ENCODE measurements at regions of chr5 and their contacts with region 1.

Region 1: DNA sequence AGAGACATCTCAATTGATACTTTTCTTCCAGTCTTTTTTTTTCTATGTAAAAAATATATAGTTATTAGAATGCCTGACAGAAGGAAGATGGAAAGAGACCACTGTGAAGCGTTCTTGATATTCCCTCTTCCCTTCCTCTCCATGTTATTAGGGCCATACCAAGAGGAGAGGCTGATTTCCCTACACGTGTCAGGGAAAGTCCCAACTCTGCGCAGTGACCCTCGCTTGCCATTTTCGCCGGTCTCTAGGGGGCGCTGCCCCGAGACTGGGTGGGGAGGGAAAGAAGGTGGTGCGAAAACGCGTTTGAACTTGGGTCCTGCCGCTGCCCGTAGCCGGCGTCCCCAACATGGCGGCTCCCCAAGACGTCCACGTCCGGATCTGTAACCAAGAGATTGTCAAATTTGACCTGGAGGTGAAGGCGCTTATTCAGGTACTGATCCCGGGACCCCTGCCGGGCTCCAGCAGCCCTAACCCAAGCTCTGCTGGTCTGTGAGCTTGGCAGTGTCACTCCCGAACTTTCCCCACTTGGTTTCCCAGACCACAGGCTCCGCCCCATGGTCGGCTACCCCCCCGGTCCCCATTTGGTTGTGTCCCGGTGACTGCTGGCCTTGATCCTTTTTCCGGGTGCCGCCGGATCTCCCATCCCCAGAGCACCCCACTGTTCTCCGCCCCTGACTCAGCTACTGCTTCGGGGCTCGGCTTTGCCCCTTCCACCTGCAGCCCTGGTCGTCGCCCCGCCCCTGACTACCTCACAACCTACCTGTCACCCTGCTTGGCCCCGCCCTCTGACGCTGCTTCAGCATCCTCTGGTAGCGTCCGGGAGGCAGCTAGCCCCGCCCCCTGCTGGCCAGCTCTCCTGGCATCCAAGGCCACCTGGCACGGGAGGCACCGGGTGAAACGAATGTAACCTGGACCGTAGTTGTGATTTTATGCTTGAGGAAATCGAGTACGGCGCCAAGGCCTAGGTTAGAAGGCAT is at the start of gene BNIP1:
- DNase-seq: peak; percentile 98
- H3K4me3 Mint-ChIP-seq: peak within 1 kb of the TSS; percentile 99
- H3K27ac Mint-ChIP-seq: peak within 1 kb of the TSS; percentile 97
- H3K4me1 Mint-ChIP-seq: peaks cover 9% of the 10 kb centered on the region
- H3K27me3 Mint-ChIP-seq: no peaks in the 10 kb centered on the region
- total RNA-seq, gene BNIP1: 19.3 to 20.9 TPM

Region 2: DNA sequence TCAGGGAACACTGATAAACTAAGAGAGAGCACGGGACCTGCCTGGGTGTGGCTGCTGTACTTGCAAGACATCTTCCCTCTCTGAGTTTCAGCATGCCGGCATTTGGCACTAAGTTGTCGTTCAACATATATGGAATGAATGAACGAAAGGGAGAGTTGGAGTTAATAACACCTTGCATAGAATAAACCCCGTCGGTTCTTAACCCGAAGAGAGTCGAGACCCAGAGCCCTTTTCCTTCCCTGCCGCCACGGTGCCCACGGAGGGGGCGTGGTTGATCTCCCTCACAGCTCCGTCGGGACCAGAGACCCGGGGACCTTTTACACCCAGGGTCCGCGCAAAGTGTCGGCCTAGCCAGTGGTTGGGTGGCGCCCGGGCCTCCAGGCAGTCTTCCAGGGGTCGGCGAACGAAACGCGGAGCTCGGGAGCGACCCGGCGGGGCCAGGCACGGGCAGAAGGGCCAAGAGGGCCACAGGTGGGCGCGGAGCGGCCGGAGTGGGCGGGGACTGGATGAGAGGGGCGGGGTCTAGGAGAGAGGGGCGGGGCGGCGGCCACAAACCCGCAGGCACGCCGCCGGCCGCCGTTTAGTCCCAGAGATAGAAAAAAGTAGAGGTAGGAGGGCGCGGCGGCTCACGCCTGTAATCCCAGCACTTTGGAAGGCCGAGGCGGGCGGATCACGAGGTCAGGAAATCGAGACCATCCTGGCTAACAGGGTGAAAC is 186.0 kb before region 1 on chr5:
- CTCF ChIA-PET with region 1: interaction called, 3 read pairs
- POLR2A ChIA-PET with region 1: no interaction called
- intact Hi-C with region 1: loop called (anchors 1 kb)
- DNase-seq: peak; percentile 71
- H3K4me3 Mint-ChIP-seq: peak overlapping the region; percentile 98
- H3K27ac Mint-ChIP-seq: peak overlapping the region; percentile 83
- H3K4me1 Mint-ChIP-seq: peaks cover 18% of the 10 kb centered on the region
- H3K27me3 Mint-ChIP-seq: no peaks in the 10 kb centered on the region

Region 3: GRCh38 chr5:173057062-173057924 is 87.2 kb before region 1 on chr5:
- CTCF ChIA-PET with region 1: interaction called, 7 read pairs
- POLR2A ChIA-PET with region 1: interaction called, 7 read pairs
- intact Hi-C with region 1: loop called (anchors 1 kb)
- DNase-seq: peak; percentile 100
- H3K4me3 Mint-ChIP-seq: peak overlapping the region; percentile 97
- H3K27ac Mint-ChIP-seq: peak overlapping the region; percentile 97
- H3K4me1 Mint-ChIP-seq: peaks cover 44% of the 10 kb centered on the region
- H3K27me3 Mint-ChIP-seq: no peaks in the 10 kb centered on the region

Region 4: GRCh38 chr5:173204185-173204979 is 59.9 kb after region 1 on chr5:
- CTCF ChIA-PET with region 1: interaction called, 3 read pairs
- POLR2A ChIA-PET with region 1: no interaction called
- intact Hi-C with region 1: loop called (anchors 2 kb)
- DNase-seq: no peak
- H3K4me3 Mint-ChIP-seq: no peak overlapping the region
- H3K27ac Mint-ChIP-seq: no peak overlapping the region
- H3K4me1 Mint-ChIP-seq: no peaks in the 10 kb centered on the region
- H3K27me3 Mint-ChIP-seq: peaks cover 28% of the 10 kb centered on the region